ENCODE measurements at regions of chr6 and their contacts with region 1.

Region 1: DNA sequence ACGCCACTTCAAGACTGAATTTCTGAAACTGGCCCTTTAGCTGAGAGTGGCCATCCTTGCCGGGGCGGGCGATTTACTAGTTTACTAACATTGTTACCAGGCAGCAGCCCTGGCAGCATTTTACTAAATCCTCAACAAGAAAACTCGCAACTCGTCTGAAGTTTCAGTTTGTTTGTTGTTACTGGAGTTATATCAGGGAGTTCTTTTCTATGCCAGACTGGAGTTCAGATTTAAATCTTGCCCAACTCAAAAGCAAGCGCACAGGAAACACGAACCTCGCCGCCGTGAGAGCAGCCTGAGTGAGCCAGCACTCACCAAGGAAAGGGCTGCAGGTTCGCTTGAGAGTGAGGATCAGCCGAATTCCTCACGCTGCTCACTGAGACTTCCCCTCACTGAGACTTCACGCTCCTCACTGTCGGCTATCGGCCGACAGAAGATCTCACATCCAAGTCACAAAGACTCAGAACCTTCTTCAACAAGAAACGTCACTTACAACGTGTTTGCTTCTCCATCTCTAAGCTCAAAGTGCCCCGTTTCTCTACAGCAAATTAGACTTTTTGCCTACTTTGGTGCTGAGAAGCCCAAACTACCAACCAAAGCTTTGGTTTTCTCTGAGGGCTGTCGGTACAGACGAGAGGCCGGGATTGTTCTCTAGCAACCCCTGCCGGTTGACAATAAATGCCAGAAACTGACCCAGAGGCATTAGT is 78.9 kb downstream of the OLIG3 start:
- DNase-seq: peak in 4 of 5 donors; percentile 36 to 51 (median 39)
- ATAC-seq: peak; percentile 75 to 93 (median 90)
- H3K4me3 ChIP-seq: peak overlapping the region in 11 of 12 donors; percentile 7 to 58 (median 47)
- H3K27ac ChIP-seq: peak overlapping the region in 9 of 12 donors; percentile 19 to 76 (median 47)
- H3K4me1 ChIP-seq: peaks cover 0 to 17% (median 2%) of the 10 kb centered on the region in 12 donors
- H3K27me3 ChIP-seq: peaks cover 0 to 29% (median 4%) of the 10 kb centered on the region in 9 donors
- CTCF ChIP-seq: peak; percentile 40 to 72 (median 60)
- POLR2A ChIP-seq: no peak

Region 2: DNA sequence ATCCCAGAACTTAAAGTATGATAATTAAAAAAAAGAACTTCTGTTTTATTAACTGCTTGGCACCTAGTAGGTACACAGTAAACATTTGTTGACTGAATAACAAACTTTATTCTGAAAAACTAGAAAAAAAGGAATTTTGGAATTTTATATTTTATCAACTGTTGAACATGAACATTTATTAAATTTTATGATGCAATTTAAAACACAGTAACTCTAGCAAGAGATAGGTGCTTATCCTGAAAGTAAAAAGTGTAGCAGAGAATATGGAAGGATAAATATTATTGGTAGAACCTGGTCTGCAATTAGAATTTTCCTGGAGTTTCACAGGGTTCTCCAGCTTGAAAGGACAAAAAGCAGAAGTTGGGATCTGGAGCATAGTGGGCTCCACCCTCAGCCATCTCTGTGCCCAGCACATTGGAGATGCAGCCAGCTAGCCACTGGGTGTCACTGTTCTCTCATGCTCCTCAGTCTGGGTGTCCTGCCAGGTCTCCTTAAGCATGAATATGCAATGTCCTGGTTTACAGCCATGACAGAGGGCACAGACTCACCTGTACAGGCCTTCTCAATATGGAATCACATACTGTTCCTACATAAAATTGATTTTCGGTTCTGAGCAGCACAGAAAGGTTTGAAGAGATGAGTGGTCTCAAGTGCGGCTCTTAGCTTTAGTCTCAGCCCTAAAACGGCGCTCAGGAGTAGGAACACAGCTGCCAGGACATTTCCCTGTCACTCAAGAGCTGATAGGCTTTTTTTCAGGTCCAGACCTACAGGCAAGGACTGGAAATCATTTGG is 338.8 kb before region 1 on chr6:
- intact Hi-C with region 1: loop called in 2 of 10 experiments (anchors 5 to 10 kb)
- DNase-seq: peak; percentile 64 to 80 (median 67)
- ATAC-seq: peak; percentile 95 to 100 (median 98)
- H3K4me3 ChIP-seq: no peak overlapping the region
- H3K27ac ChIP-seq: no peak overlapping the region
- H3K4me1 ChIP-seq: peaks cover 0 to 5% (median 0%) of the 10 kb centered on the region in 12 donors
- H3K27me3 ChIP-seq: no peaks in the 10 kb centered on the region
- CTCF ChIP-seq: peak; percentile 63 to 83 (median 72)
- POLR2A ChIP-seq: no peak

Region 3: DNA sequence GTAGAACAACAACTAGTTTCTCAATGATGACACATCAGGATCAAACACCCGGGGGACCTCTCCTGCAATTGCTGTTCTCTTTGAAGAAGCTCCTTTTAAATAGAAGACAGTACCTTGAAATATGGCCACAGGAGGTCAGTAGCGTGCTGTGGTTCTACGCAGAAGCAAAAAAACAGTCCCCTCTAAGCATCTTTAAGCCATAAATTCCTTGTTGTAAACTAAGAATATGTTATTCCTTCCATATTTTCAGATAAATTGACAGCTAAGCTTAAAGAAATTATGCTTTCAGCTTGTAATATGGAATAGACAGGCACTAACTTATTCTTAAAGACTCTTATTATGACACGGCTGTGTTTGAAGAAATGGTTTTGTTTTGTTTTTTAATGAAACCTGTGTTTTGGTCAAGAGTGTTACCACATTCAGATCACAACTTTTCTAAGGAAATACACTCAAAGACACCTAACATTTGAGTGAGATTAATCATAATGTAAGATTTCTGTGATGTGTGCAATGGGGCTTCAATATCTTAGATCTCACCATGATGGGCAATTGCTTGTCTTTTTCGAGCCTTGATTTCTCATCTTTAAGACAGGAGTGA is 320.8 kb before region 1 on chr6:
- intact Hi-C with region 1: loop called in 8 of 10 experiments (anchors 5 to 10 kb)
- DNase-seq: peak in 4 of 5 donors; percentile 39 to 61 (median 42)
- ATAC-seq: peak; percentile 32 to 80 (median 76)
- H3K4me3 ChIP-seq: no peak overlapping the region
- H3K27ac ChIP-seq: no peak overlapping the region
- H3K4me1 ChIP-seq: peaks cover 0 to 10% (median 2%) of the 10 kb centered on the region in 12 donors
- H3K27me3 ChIP-seq: no peaks in the 10 kb centered on the region
- CTCF ChIP-seq: peak; percentile 68 to 92 (median 80)
- POLR2A ChIP-seq: no peak

Region 4: DNA sequence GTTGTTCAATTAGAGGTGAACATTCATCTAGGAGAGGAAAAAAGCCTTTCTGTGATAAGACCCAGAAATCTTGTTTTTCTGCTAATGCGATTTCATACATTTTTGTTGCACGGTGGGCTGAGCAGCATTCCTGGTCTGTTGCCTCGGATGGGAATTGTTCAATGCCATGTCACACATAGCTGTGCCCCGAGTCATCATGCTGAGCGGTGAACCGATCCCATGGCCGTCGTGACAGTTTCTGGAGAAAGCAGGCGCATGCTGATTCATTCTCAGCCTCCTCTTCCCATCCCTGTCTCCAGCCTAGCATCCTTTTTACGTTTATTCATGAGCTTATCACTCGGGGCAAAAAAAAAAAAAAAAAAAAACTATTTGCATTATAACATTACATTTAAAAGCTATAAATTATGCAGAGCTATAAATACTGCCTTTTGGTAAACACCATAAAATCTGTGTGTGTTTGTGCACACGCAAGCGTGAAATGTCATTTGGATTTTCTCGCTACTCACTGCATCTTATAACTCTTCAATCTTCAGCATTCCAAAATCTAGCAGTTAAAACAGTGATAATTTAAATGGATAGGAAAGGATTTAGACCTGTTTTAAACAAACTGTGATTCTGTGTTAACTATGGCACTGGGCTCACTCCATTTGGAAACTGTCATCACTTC is 137.2 kb before region 1 on chr6:
- intact Hi-C with region 1: loop called in 7 of 10 experiments (anchors 5 to 10 kb)
- DNase-seq: no peak
- ATAC-seq: no peak
- H3K4me3 ChIP-seq: no peak overlapping the region
- H3K27ac ChIP-seq: no peak overlapping the region
- H3K4me1 ChIP-seq: peaks cover 0 to 3% (median 0%) of the 10 kb centered on the region in 12 donors
- H3K27me3 ChIP-seq: no peaks in the 10 kb centered on the region
- CTCF ChIP-seq: no peak
- POLR2A ChIP-seq: no peak

Region 5: DNA sequence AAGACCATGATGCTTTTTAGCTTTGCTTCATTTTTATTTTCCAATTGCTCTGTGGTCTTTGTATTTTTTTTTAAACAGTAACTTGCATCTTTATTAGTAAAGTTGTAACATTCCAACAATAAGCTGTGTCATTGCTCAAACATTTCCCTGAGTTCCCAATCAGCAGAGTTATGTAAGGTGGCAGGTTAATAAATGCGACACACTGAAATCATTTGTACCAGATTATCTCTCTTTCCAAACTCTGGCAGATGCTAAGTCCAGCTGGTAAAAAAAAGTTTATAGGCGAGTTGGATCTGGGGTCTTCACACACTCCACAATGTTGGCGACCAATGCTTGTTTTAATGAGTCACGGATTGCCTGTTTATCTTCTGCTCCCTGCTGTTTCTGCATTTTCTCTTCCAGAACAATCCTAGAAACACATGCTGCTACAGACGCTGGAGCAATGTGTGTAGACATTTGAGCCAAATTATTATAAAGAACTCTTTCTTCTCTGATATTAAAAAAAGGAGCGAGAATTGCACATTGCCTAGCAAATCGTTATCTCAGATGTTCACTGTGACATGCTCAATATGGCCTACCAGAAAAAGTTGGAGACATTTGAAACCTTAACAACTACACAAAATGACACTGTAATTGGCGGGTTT is 82.5 kb before region 1 on chr6:
- intact Hi-C with region 1: loop called in 1 of 10 experiments (anchors 10 kb)
- DNase-seq: peak in 1 of 5 donors; percentile 17
- ATAC-seq: peak; percentile 30 to 88 (median 74)
- H3K4me3 ChIP-seq: no peak overlapping the region
- H3K27ac ChIP-seq: peak overlapping the region in 2 of 12 donors; percentile 10 to 13
- H3K4me1 ChIP-seq: peaks cover 0 to 10% (median 0%) of the 10 kb centered on the region in 12 donors
- H3K27me3 ChIP-seq: no peaks in the 10 kb centered on the region
- CTCF ChIP-seq: no peak
- POLR2A ChIP-seq: no peak

Region 6: GRCh38 chr6:137512757-137513605 is 97.7 kb after region 1 on chr6:
- intact Hi-C with region 1: no loop called
- DNase-seq: no peak
- ATAC-seq: no peak
- H3K4me3 ChIP-seq: no peak overlapping the region
- H3K27ac ChIP-seq: no peak overlapping the region
- H3K4me1 ChIP-seq: no peaks in the 10 kb centered on the region
- H3K27me3 ChIP-seq: peaks cover 0 to 95% (median 54%) of the 10 kb centered on the region in 9 donors
- CTCF ChIP-seq: no peak
- POLR2A ChIP-seq: no peak

Region 7: GRCh38 chr6:137536104-137536773 is 121.0 kb after region 1 on chr6:
- intact Hi-C with region 1: no loop called
- DNase-seq: no peak
- ATAC-seq: no peak
- H3K4me3 ChIP-seq: no peak overlapping the region
- H3K27ac ChIP-seq: no peak overlapping the region
- H3K4me1 ChIP-seq: no peaks in the 10 kb centered on the region
- H3K27me3 ChIP-seq: peaks cover 0 to 41% (median 0%) of the 10 kb centered on the region in 9 donors
- CTCF ChIP-seq: no peak
- POLR2A ChIP-seq: no peak